B cell (primary cell): ENCODE measurements at regions of chr15 and their contacts with region 1.

Region 1: DNA sequence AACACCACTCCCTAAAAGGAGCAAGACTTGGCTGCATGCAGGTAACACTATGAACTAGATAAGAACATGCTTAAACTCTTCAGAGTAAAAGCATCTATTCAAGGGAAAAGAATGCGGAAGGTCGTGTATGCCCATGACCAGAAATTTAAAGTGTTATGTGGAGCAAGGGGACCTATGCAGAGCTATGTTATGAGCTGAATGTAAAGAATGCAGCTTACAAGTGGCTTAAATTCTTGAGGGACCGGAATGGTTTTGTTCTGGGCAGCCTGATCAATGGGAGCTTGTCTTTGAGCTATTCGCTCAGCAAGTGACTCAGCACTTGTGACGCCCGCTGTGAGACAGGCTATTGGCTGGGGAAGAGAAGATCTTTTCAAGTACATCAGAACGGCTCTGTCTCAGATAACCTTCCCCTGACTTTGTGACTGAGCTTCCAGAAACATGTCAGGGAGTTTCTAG is 367.5 kb upstream of the THBS1 start:
- DNase-seq: no peak
- ATAC-seq: no peak
- H3K4me3 ChIP-seq: no peak overlapping the region
- H3K4me3 Mint-ChIP-seq: no peak overlapping the region
- H3K27ac ChIP-seq: no peak overlapping the region
- H3K27ac Mint-ChIP-seq: no peak overlapping the region
- H3K4me1 ChIP-seq: no peaks in the 10 kb centered on the region
- H3K4me1 Mint-ChIP-seq: no peaks in the 10 kb centered on the region
- H3K27me3 ChIP-seq: no peaks in the 10 kb centered on the region
- H3K27me3 Mint-ChIP-seq: peaks cover 16% of the 10 kb centered on the region
- CTCF ChIP-seq: no peak

Region 2: GRCh38 chr15:39251413-39252133 is 38.2 kb after region 1 on chr15:
- CTCF ChIA-PET with region 1: no interaction called
- POLR2A ChIA-PET with region 1: no interaction called
- intact Hi-C with region 1: loop called (anchors 1 kb)
- DNase-seq: no peak
- ATAC-seq: no peak
- H3K4me3 ChIP-seq: no peak overlapping the region
- H3K4me3 Mint-ChIP-seq: no peak overlapping the region
- H3K27ac ChIP-seq: no peak overlapping the region
- H3K27ac Mint-ChIP-seq: no peak overlapping the region
- H3K4me1 ChIP-seq: no peaks in the 10 kb centered on the region
- H3K4me1 Mint-ChIP-seq: no peaks in the 10 kb centered on the region
- H3K27me3 ChIP-seq: peaks cover 0 to 2% (median 0%) of the 10 kb centered on the region in 4 experiments
- H3K27me3 Mint-ChIP-seq: peaks cover 7% of the 10 kb centered on the region
- CTCF ChIP-seq: no peak